HepG2 (cell line): ENCODE measurements at regions of chr20 and their contacts with region 1.

Region 1: DNA sequence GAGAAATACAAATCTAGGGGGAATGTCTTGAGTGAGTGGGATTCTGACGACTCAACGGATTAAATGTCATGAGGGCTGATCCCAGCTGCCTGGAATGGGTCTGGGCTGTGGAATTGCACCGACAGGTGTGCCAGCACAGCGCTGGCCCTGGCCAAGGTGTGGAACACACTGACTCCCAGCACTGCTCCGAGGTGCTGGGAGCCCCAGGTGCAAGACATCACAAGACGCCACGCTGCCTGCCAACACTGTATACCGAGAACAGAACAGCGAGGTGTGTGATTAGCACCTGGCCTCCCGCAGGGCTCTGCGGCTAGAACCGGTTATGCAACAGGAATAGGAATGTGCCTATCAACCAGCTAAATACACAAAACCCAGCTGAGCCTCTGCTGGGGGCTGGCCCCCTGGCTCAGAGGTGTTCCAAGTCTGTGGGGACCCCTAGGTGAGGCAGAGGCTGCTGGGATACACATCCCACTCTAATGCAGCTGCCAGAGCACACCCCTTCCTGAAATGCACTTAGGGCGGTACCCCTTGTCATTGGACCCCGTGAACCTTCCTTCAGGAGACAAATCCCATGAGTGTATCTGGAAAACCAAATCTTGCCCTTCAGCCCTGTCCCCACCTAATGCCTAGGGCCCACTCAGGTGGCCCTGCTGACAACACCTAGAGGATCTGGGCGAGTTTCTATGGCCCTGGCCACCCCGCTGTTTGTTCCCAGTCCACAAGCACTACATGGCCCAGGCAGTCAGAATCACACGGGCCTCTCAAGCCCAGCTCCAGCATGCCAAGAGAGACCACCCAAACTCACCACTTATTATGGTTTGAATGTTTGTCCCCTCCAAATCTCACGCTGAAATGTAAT is 24.9 kb upstream of the APMAP start:
- DNase-seq: peak; percentile 64
- ATAC-seq: peak; percentile 78
- H3K4me3 ChIP-seq: no peak overlapping the region; a peak in 1 of 6 replicates
- H3K27ac ChIP-seq: no peak overlapping the region
- H3K4me1 ChIP-seq: peaks cover 37% of the 10 kb centered on the region
- H3K27me3 ChIP-seq: no peaks in the 10 kb centered on the region
- CTCF ChIP-seq: no peak
- EP300 ChIP-seq: peak in 1 of 2 experiments; percentile 55; a peak in 1 of 4 replicates
- POLR2A ChIP-seq: no peak
- RAD21 ChIP-seq: no peak; the same call in 1 of the 2 replicates

Region 2: DNA sequence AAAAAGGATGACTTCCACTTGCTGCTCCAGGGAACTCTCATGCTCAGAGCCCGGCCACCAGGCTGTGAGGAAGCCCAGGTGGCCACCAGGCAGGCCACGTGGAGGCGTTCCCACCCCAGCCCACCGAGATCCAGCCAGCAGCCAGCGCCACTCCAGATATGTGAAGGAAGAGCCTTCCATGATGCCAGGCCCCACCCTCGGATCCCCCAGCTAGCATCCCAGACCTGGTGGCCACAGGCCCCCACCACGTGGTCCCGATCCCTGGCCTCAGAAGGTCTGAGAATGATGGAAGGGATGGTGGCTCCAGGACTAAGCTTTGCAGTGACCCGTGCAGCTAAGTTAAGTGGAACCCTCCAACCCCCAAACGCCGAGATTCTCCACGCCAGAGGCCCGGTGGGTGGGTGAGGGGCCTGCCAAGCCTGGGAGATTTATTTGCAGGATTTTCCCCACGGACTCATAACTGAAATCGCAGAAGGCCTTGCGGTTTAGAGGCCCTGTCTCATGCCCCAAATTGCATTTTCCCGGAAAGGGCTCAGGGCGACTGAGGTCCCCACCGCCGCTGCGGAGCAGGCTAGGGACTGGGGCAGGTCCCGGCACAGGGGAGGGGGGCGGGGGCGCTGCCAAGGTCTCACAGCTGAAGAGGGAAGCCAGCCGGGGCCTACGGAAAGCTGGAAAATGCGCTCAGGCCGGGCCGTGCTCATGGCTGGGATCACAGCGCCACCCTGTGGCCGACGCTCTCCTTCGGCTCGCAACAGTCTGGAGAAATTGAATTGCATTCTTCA is 99.5 kb before region 1 on chr20:
- CTCF ChIA-PET with region 1: no interaction called
- POLR2A ChIA-PET with region 1: no interaction called
- in situ Hi-C with region 1: no loop called
- intact Hi-C with region 1: no loop called
- DNase-seq: peak; percentile 53
- ATAC-seq: peak; percentile 94
- H3K4me3 ChIP-seq: no peak overlapping the region
- H3K27ac ChIP-seq: no peak overlapping the region
- H3K4me1 ChIP-seq: peaks cover 15% of the 10 kb centered on the region; the same call in 1 of the 2 replicates
- H3K27me3 ChIP-seq: peaks cover 6 to 35% of the 10 kb centered on the region in 2 experiments; a peak in 4 of 5 replicates
- CTCF ChIP-seq: peak; percentile 96
- EP300 ChIP-seq: no peak
- POLR2A ChIP-seq: no peak
- RAD21 ChIP-seq: peak; percentile 95

Region 3: GRCh38 chr20:24978513-24978912 is 39.0 kb before region 1 on chr20:
- CTCF ChIA-PET with region 1: no interaction called
- POLR2A ChIA-PET with region 1: no interaction called
- in situ Hi-C with region 1: no loop called
- intact Hi-C with region 1: no loop called
- DNase-seq: no peak
- ATAC-seq: no peak
- H3K4me3 ChIP-seq: no peak overlapping the region
- H3K27ac ChIP-seq: no peak overlapping the region
- H3K4me1 ChIP-seq: peaks cover 1% of the 10 kb centered on the region
- H3K27me3 ChIP-seq: no peaks in the 10 kb centered on the region
- CTCF ChIP-seq: no peak
- EP300 ChIP-seq: no peak
- POLR2A ChIP-seq: no peak
- RAD21 ChIP-seq: no peak

Region 4: GRCh38 chr20:25057234-25058050 is 40.0 kb after region 1 on chr20:
- CTCF ChIA-PET with region 1: no interaction called
- POLR2A ChIA-PET with region 1: interaction called, 4 read pairs
- in situ Hi-C with region 1: no loop called
- intact Hi-C with region 1: loop called (anchors 5 kb)
- DNase-seq: no peak
- ATAC-seq: peak; percentile 66
- H3K4me3 ChIP-seq: peak overlapping the region; percentile 64 to 82 (median 67)
- H3K27ac ChIP-seq: peak overlapping the region; percentile 6
- H3K4me1 ChIP-seq: peaks cover 92% of the 10 kb centered on the region
- H3K27me3 ChIP-seq: peaks cover 0 to 29% of the 10 kb centered on the region in 2 experiments; a peak in 4 of 5 replicates
- CTCF ChIP-seq: no peak
- EP300 ChIP-seq: no peak; a peak in 1 of 4 replicates
- POLR2A ChIP-seq: peak in 1 of 2 experiments; percentile 62; a peak in 2 of 4 replicates
- RAD21 ChIP-seq: peak; percentile 54